ENCODE measurements at regions of chr9 and their contacts with region 1.

Region 1: GRCh38 chr9:34072868-34073590 is 24.3 kb upstream of the UBAP2 start:
- DNase-seq: no peak
- H3K4me3 ChIP-seq: no peak overlapping the region
- H3K4me3 Mint-ChIP-seq: no peak overlapping the region
- H3K27ac ChIP-seq: no peak overlapping the region
- H3K27ac Mint-ChIP-seq: peak overlapping the region in 3 of 7 donors; percentile 37 to 89 (median 67)
- H3K4me1 ChIP-seq: no peaks in the 10 kb centered on the region
- H3K4me1 Mint-ChIP-seq: peaks cover 0 to 3% (median 2%) of the 10 kb centered on the region in 4 donors
- H3K27me3 ChIP-seq: no peaks in the 10 kb centered on the region
- H3K27me3 Mint-ChIP-seq: no peaks in the 10 kb centered on the region

Region 2: GRCh38 chr9:33823801-33824200 is 249.2 kb before region 1 on chr9:
- CTCF ChIA-PET with region 1: no interaction called
- POLR2A ChIA-PET with region 1: no interaction called
- intact Hi-C with region 1: no loop called
- DNase-seq: no peak
- H3K4me3 ChIP-seq: no peak overlapping the region
- H3K4me3 Mint-ChIP-seq: no peak overlapping the region
- H3K27ac ChIP-seq: no peak overlapping the region
- H3K27ac Mint-ChIP-seq: peak overlapping the region in 1 of 7 donors; percentile 7
- H3K4me1 ChIP-seq: peaks cover 26% of the 10 kb centered on the region
- H3K4me1 Mint-ChIP-seq: peaks cover 14 to 31% (median 21%) of the 10 kb centered on the region in 4 donors
- H3K27me3 ChIP-seq: no peaks in the 10 kb centered on the region
- H3K27me3 Mint-ChIP-seq: no peaks in the 10 kb centered on the region

Region 3: DNA sequence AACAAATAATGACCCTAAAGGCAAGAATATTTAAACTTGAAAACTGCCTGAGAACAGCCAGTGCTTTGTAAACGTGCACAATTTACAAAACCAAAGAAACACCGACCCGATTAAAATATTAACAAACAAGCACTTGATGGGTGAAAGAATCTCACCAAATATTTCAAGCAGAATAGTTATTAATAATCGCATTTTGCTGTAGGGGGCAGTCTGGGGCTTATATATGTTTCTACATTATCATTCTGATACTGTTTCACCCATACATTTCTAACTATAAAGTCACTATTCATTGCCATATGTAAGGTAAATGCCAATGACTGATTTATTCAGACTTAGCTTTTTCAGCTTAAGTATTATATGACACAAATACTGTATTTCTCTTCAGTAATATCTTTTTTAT is 62.0 kb before region 1 on chr9:
- CTCF ChIA-PET with region 1: interaction called, 15 read pairs
- POLR2A ChIA-PET with region 1: no interaction called
- intact Hi-C with region 1: loop called (anchors 1 kb)
- DNase-seq: peak in 4 of 5 donors; percentile 14 to 26 (median 20)
- H3K4me3 ChIP-seq: no peak overlapping the region
- H3K4me3 Mint-ChIP-seq: no peak overlapping the region
- H3K27ac ChIP-seq: no peak overlapping the region
- H3K27ac Mint-ChIP-seq: no peak overlapping the region
- H3K4me1 ChIP-seq: no peaks in the 10 kb centered on the region
- H3K4me1 Mint-ChIP-seq: peaks cover 0 to 4% (median 0%) of the 10 kb centered on the region in 4 donors
- H3K27me3 ChIP-seq: no peaks in the 10 kb centered on the region
- H3K27me3 Mint-ChIP-seq: no peaks in the 10 kb centered on the region

Region 4: GRCh38 chr9:34084562-34084961 is 11.5 kb after region 1 on chr9:
- CTCF ChIA-PET with region 1: interaction called, 12 read pairs
- POLR2A ChIA-PET with region 1: no interaction called
- intact Hi-C with region 1: no loop called
- DNase-seq: no peak
- H3K4me3 ChIP-seq: no peak overlapping the region
- H3K4me3 Mint-ChIP-seq: no peak overlapping the region
- H3K27ac ChIP-seq: no peak overlapping the region
- H3K27ac Mint-ChIP-seq: peak overlapping the region in 4 of 7 donors; percentile 38 to 77 (median 62)
- H3K4me1 ChIP-seq: no peaks in the 10 kb centered on the region
- H3K4me1 Mint-ChIP-seq: no peaks in the 10 kb centered on the region
- H3K27me3 ChIP-seq: no peaks in the 10 kb centered on the region
- H3K27me3 Mint-ChIP-seq: no peaks in the 10 kb centered on the region